Activated CD8-positive, alpha-beta T cell treated with anti-CD3 and anti-CD28 coated beads for 36 hours (primary cell): ENCODE measurements at regions of chr6 and their contacts with region 1.

Region 1: DNA sequence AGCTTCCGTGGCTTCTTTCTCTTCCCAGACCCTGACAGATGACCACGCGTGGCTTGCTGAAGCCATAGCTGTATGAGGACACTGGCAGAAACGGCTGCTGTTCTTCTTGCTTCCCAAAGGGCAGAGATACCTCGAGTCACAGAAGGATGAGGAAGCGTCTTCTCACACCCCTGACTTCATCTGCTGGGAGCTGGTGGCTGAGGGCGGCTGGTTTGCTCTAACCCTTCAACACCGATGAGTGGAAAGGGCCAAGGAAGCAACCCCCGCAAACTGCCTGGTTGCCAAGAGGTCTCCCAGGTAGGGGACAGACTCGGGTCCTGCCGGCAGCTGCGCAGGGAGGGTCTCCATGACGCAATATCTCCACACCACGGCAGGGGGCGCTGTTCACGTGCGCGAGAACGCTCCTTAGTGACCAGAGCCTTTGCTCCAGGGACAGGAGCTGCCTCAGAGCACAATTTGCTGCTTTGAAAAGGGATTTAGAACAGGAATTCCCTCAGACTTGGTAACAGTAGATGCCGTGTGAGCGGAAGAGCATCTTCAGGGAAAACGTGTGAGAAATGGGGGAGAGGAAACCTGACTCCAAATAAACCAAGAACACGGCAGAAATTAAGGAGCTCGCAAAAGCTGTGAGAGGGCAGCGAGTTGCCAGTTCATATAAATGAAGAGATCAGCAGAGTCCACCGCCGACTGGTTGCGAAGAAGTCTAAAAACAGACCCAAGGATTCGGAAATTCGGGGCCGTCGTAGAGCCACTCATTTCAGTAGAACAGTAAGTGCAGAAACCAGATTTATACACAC is 80.2 kb downstream of the ERMARD start:
- DNase-seq: peak; percentile 81
- ATAC-seq: peak; percentile 87
- H3K4me3 Mint-ChIP-seq: no peak overlapping the region
- H3K27ac Mint-ChIP-seq: no peak overlapping the region
- H3K4me1 Mint-ChIP-seq: peaks cover 2% of the 10 kb centered on the region
- H3K27me3 Mint-ChIP-seq: peaks cover 21% of the 10 kb centered on the region
- CTCF ChIP-seq: peak; percentile 96

Region 2: GRCh38 chr6:169789982-169790927 is 41.4 kb before region 1 on chr6:
- CTCF ChIA-PET with region 1: interaction called, 20 read pairs
- POLR2A ChIA-PET with region 1: interaction called, 4 read pairs
- intact Hi-C with region 1: no loop called
- DNase-seq: peak; percentile 75
- ATAC-seq: peak; percentile 97
- H3K4me3 Mint-ChIP-seq: peak overlapping the region; percentile 70
- H3K27ac Mint-ChIP-seq: no peak overlapping the region
- H3K4me1 Mint-ChIP-seq: peaks cover 11% of the 10 kb centered on the region
- H3K27me3 Mint-ChIP-seq: peaks cover 41% of the 10 kb centered on the region
- CTCF ChIP-seq: peak; percentile 97

Region 3: GRCh38 chr6:169847901-169848311 is 16.3 kb after region 1 on chr6:
- CTCF ChIA-PET with region 1: interaction called, 25 read pairs
- POLR2A ChIA-PET with region 1: no interaction called
- intact Hi-C with region 1: no loop called
- DNase-seq: no peak
- ATAC-seq: no peak
- H3K4me3 Mint-ChIP-seq: no peak overlapping the region
- H3K27ac Mint-ChIP-seq: no peak overlapping the region
- H3K4me1 Mint-ChIP-seq: no peaks in the 10 kb centered on the region
- H3K27me3 Mint-ChIP-seq: peaks cover 3% of the 10 kb centered on the region
- CTCF ChIP-seq: no peak

Region 4: DNA sequence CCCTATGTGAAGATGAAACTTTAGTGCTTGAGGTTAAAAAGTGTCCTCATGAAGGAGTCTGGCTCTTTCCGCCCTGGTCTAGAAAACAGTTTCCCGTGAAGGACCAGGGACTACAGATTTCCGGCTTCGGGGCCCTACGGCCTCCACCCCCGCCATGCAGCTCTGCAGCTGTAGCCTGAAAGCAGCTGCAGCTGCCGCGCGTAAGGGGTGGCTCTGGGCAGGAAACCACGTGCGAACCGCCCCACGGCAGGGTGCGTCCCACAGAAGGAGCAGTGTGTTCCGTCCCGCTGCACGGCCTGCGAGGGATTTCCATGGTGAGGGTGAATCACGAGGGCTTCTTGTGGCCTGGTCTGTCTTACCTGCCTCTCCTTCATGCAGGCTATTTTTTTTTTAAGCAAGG is 36.8 kb after region 1 on chr6:
- CTCF ChIA-PET with region 1: interaction called, 15 read pairs
- POLR2A ChIA-PET with region 1: no interaction called
- intact Hi-C with region 1: no loop called
- DNase-seq: peak; percentile 83
- ATAC-seq: peak; percentile 97
- H3K4me3 Mint-ChIP-seq: no peak overlapping the region
- H3K27ac Mint-ChIP-seq: no peak overlapping the region
- H3K4me1 Mint-ChIP-seq: peaks cover 18% of the 10 kb centered on the region
- H3K27me3 Mint-ChIP-seq: no peaks in the 10 kb centered on the region
- CTCF ChIP-seq: no peak

Region 5: GRCh38 chr6:169933839-169934698 is 102.4 kb after region 1 on chr6:
- CTCF ChIA-PET with region 1: interaction called, 24 read pairs
- POLR2A ChIA-PET with region 1: no interaction called
- intact Hi-C with region 1: loop called (anchors 5 kb)
- DNase-seq: no peak
- ATAC-seq: no peak
- H3K4me3 Mint-ChIP-seq: no peak overlapping the region
- H3K27ac Mint-ChIP-seq: no peak overlapping the region
- H3K4me1 Mint-ChIP-seq: no peaks in the 10 kb centered on the region
- H3K27me3 Mint-ChIP-seq: peaks cover 8% of the 10 kb centered on the region
- CTCF ChIP-seq: no peak

Region 6: GRCh38 chr6:169984181-169985120 is 152.8 kb after region 1 on chr6:
- CTCF ChIA-PET with region 1: interaction called, 10 read pairs
- POLR2A ChIA-PET with region 1: no interaction called
- intact Hi-C with region 1: no loop called
- DNase-seq: no peak
- ATAC-seq: no peak
- H3K4me3 Mint-ChIP-seq: no peak overlapping the region
- H3K27ac Mint-ChIP-seq: no peak overlapping the region
- H3K4me1 Mint-ChIP-seq: peaks cover 1% of the 10 kb centered on the region
- H3K27me3 Mint-ChIP-seq: no peaks in the 10 kb centered on the region
- CTCF ChIP-seq: no peak

Region 7: DNA sequence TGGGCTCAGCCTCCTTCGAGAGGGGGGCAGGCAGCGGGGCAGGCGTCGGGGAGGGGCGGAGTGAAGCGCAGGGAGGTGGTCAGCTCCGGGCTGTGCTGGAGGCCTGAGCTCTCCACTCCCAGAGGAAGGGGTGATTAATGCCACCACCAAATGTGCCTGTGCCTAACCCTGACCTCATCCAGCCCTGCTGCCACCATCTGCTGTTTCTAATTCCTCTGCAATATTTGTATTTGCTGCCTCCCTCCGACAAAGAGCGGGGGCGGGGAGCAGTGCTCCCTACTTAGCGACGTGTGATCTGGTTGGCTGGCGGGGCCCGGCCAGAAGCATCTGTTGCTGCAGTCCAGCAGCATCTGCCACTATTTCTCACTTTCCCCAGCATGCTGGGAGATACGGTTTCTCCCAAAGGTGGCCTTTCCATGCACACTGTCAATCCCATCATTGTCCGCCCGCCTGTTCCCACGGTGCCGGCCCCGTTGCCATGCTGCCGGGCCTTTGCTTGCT is 412.2 kb after region 1 on chr6:
- CTCF ChIA-PET with region 1: no interaction called
- POLR2A ChIA-PET with region 1: no interaction called
- intact Hi-C with region 1: no loop called
- DNase-seq: no peak
- ATAC-seq: no peak
- H3K4me3 Mint-ChIP-seq: no peak overlapping the region
- H3K27ac Mint-ChIP-seq: no peak overlapping the region
- H3K4me1 Mint-ChIP-seq: no peaks in the 10 kb centered on the region
- H3K27me3 Mint-ChIP-seq: no peaks in the 10 kb centered on the region
- CTCF ChIP-seq: no peak

Region 8: DNA sequence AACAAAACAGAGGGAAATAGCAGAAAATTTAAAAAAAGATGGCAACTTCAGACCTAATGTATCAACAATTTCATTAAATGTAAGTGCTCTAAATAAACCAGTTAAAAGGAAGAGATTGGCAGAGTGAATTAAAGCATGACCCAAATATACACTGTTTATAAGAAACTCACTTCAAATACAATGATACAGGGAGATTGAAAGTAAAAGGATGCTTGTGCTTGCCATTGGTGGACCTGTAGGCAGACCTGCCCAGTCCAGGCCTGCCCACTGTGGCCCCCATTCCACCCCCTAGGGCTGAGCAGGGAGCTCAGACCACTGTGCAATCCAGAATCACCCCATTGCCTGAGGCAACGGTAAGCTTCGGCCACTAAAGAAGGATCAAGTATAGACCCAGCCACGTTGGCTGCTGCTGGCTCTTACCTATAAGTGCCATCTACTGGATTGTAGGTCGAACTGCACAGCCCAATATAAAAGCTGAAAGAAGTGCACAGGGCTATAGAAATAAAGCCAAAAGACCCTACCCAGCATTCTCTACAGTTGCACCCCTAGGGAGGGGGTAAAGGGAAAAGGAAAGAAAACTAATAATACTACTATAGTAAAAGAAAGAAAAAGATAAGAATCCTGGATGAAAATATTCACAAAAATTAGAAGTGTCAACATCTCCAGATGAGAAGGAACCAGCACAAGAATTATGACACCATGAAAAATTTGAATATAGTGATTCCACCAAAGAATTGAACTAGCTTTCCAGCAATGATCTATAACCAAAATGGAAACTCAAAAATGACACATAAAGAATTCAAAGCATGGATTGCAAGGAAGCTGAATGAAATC is 685.4 kb after region 1 on chr6:
- CTCF ChIA-PET with region 1: interaction called, 33 read pairs
- POLR2A ChIA-PET with region 1: interaction called, 3 read pairs
- intact Hi-C with region 1: loop called (anchors 10 kb)
- DNase-seq: peak; percentile 62
- ATAC-seq: peak; percentile 99
- H3K4me3 Mint-ChIP-seq: no peak overlapping the region
- H3K27ac Mint-ChIP-seq: no peak overlapping the region
- H3K4me1 Mint-ChIP-seq: no peaks in the 10 kb centered on the region
- H3K27me3 Mint-ChIP-seq: peaks cover 10% of the 10 kb centered on the region
- CTCF ChIP-seq: peak; percentile 84